GM10248 (cell line): ENCODE measurements at regions of chr12 and their contacts with region 1.

Region 1: DNA sequence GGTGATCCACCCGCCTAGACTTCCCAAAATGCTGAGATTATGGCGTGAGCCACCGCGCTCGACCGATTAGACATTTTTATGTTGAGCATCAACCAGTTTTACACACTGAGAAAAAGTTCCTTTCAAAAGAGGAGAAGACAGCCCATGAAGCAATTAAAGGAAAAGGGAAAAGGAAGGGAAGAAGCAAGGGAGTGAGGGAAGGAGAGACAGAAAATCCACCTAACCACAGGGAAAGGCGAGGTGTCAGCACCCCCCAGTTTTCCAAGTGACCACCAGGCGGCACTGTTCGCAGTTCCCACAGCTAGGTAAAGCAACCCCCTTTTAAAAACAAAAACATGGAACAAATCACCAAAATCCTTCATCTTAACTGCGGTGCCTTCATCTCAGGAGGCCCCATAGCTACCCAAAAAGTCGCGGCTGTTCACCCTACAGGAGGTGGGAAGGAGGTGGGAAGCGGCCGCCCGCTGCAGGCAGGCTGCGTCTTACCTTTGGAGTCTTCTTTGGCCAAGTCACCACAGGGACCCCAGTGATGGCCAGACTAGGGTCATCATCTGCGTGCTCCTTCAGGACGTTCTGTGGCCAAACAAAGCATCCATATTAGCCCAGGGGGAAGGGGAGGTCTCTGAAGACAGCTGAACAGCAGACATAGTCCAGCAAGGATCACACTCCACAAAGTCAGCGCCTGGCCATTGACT is 86.6 kb downstream of the KDM2B start:
- DNase-seq: peak; percentile 67
- CTCF ChIP-seq: peak; percentile 81

Region 2: DNA sequence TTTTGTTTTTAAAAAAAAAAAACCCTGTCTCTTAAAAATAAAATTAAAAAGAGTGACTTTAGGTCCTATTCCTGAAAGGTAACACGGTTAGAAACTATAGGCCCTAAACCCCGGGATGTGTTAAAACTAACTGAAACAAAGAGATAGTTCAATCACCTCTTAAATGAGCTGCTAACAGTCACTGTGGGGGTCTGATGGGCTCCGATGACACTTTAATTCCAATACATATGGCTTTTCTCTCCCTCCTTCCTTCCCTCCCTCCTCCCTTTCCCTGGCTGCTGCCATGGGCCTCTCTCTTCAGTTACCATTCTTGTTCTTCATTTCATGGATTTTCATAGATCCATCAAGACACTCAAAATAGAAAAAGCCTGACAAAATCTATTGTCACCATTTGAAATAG is 17.8 kb before region 1 on chr12:
- CTCF ChIA-PET with region 1: interaction called, 24 read pairs
- POLR2A ChIA-PET with region 1: interaction called, 4 read pairs
- DNase-seq: no peak
- CTCF ChIP-seq: no peak